Pancreas (tissue), 10 donors: ENCODE measurements at regions of chr14 and their contacts with region 1.

Region 1: GRCh38 chr14:64764641-64765520 is 60.7 kb downstream of the PLEKHG3 start:
- DNase-seq: peak in 5 of 6 donors; percentile 59 to 88 (median 78)
- ATAC-seq: peak; percentile 57 to 77 (median 76)
- H3K4me3 ChIP-seq: peak overlapping the region in 2 of 4 donors; percentile 25 to 34
- H3K27ac ChIP-seq: no peak overlapping the region
- H3K4me1 ChIP-seq: peaks cover 15 to 40% (median 21%) of the 10 kb centered on the region in 3 donors
- H3K27me3 ChIP-seq: no peaks in the 10 kb centered on the region
- CTCF ChIP-seq: peak; percentile 74 to 92 (median 89)

Region 2: DNA sequence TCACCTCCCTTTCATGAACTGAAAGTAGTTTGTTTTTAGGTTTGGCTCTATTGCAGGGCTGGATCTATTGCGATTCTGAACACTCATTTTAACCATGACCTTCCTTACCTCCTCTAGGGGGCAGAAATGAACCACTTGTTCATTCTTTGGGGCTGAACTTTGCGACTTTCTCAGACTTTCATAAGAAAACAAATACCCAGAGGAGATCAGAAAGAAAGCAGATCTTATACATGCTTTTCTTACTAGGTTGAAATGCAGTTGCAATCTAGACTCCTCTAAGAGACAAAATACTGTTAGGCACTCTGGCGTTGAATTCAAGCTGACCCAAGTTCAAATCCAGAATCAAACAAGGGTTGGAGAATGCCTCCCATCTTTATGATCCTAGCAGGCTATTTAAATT is 93.3 kb before region 1 on chr14:
- intact Hi-C with region 1: loop called (anchors 5 to 10 kb)
- DNase-seq: peak in 1 of 6 donors; percentile 25
- ATAC-seq: peak; percentile 72 to 93 (median 88)
- H3K4me3 ChIP-seq: no peak overlapping the region
- H3K27ac ChIP-seq: no peak overlapping the region
- H3K4me1 ChIP-seq: peaks cover 0 to 2% (median 0%) of the 10 kb centered on the region in 3 donors
- H3K27me3 ChIP-seq: no peaks in the 10 kb centered on the region
- CTCF ChIP-seq: peak; percentile 42 to 61 (median 51)